Activated CD8-positive, alpha-beta T cell treated with anti-CD3 and anti-CD28 coated beads for 36 hours (primary cell): ENCODE measurements at regions of chr6 and their contacts with region 1.

Region 1: GRCh38 chr6:144223686-144224085 is 61.4 kb upstream of the UTRN start:
- DNase-seq: no peak
- ATAC-seq: no peak
- H3K4me3 Mint-ChIP-seq: no peak overlapping the region
- H3K27ac Mint-ChIP-seq: no peak overlapping the region
- H3K4me1 Mint-ChIP-seq: peaks cover 4% of the 10 kb centered on the region
- H3K27me3 Mint-ChIP-seq: no peaks in the 10 kb centered on the region
- CTCF ChIP-seq: no peak

Region 2: DNA sequence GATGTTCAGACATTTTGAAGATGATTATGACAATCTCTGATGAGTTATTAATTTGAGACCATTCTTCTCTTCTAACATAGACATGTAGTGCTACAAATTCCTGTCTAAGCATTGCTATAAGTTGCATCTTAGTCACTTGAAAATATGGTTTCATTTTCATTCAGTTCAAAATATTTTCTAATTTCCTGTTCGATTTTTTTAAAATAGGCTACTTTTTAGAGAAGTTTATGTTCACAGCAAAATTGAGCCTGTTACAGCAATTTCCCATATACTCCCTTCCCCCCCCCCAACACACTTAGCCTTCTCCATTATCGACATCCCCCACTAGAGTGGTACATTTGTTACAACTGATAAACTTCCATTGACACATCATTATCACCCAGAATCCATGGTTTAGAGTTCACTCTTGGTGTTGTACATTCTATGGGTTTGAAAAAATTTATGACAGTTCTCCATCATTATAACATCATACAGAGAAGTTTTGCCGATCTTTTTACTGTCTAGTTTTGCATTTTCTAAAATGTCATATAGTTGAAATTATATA is 246.8 kb before region 1 on chr6:
- CTCF ChIA-PET with region 1: no interaction called
- POLR2A ChIA-PET with region 1: no interaction called
- intact Hi-C with region 1: no loop called
- DNase-seq: no peak
- ATAC-seq: no peak
- H3K4me3 Mint-ChIP-seq: no peak overlapping the region
- H3K27ac Mint-ChIP-seq: no peak overlapping the region
- H3K4me1 Mint-ChIP-seq: peaks cover 2% of the 10 kb centered on the region
- H3K27me3 Mint-ChIP-seq: no peaks in the 10 kb centered on the region
- CTCF ChIP-seq: no peak

Region 3: GRCh38 chr6:144104898-144105487 is 118.7 kb before region 1 on chr6:
- CTCF ChIA-PET with region 1: interaction called, 44 read pairs
- POLR2A ChIA-PET with region 1: no interaction called
- intact Hi-C with region 1: loop called (anchors 1 kb)
- DNase-seq: peak; percentile 45
- ATAC-seq: peak; percentile 86
- H3K4me3 Mint-ChIP-seq: no peak overlapping the region
- H3K27ac Mint-ChIP-seq: no peak overlapping the region
- H3K4me1 Mint-ChIP-seq: peaks cover 11% of the 10 kb centered on the region
- H3K27me3 Mint-ChIP-seq: no peaks in the 10 kb centered on the region
- CTCF ChIP-seq: peak; percentile 84